ENCODE measurements at regions of chr11 and their contacts with region 1.

Region 1: GRCh38 chr11:118907051-118908042 is 18.4 kb downstream of the BCL9L start:
- DNase-seq: no peak
- ATAC-seq: peak; percentile 50
- H3K4me3 ChIP-seq: peak overlapping the region; percentile 18 to 19; a peak in 3 of 4 replicates
- H3K27ac ChIP-seq: peak overlapping the region; percentile 100
- H3K4me1 ChIP-seq: peaks cover 37 to 61% of the 10 kb centered on the region in 2 experiments
- H3K27me3 ChIP-seq: no peaks in the 10 kb centered on the region
- CTCF ChIP-seq: peak in 2 of 3 experiments; percentile 87 to 92; a peak in 4 of 6 replicates
- POLR2A ChIP-seq: no peak
- RAD21 ChIP-seq: no peak

Region 2: GRCh38 chr11:118740892-118741291 is 166.5 kb before region 1 on chr11:
- CTCF ChIA-PET with region 1: no interaction called
- POLR2A ChIA-PET with region 1: no interaction called
- RAD21 ChIA-PET with region 1: no interaction called
- intact Hi-C with region 1: no loop called
- DNase-seq: no peak
- ATAC-seq: no peak
- H3K4me3 ChIP-seq: no peak overlapping the region
- H3K27ac ChIP-seq: no peak overlapping the region
- H3K4me1 ChIP-seq: no peaks in the 10 kb centered on the region
- H3K27me3 ChIP-seq: no peaks in the 10 kb centered on the region
- CTCF ChIP-seq: no peak
- POLR2A ChIP-seq: no peak
- RAD21 ChIP-seq: no peak

Region 3: GRCh38 chr11:118791111-118791965 is 116.0 kb before region 1 on chr11 and contains the start of gene DDX6:
- CTCF ChIA-PET with region 1: interaction called, 4 read pairs
- POLR2A ChIA-PET with region 1: interaction called, 15 read pairs
- RAD21 ChIA-PET with region 1: interaction called in 1 of 2 experiments, 3 read pairs
- intact Hi-C with region 1: loop called (anchors 5 kb)
- DNase-seq: peak; percentile 45
- ATAC-seq: peak; percentile 70
- H3K4me3 ChIP-seq: peak within 1 kb of the TSS; percentile 96 to 99
- H3K27ac ChIP-seq: peak within 1 kb of the TSS; percentile 96
- H3K4me1 ChIP-seq: peaks cover 14 to 39% of the 10 kb centered on the region in 2 experiments
- H3K27me3 ChIP-seq: no peaks in the 10 kb centered on the region
- CTCF ChIP-seq: peak in 2 of 3 experiments; percentile 16 to 17; a peak in 2 of 6 replicates
- POLR2A ChIP-seq: no peak
- RAD21 ChIP-seq: no peak; the same call in 1 of the 2 replicates
- total RNA-seq, gene DDX6: 150 TPM

Region 4: DNA sequence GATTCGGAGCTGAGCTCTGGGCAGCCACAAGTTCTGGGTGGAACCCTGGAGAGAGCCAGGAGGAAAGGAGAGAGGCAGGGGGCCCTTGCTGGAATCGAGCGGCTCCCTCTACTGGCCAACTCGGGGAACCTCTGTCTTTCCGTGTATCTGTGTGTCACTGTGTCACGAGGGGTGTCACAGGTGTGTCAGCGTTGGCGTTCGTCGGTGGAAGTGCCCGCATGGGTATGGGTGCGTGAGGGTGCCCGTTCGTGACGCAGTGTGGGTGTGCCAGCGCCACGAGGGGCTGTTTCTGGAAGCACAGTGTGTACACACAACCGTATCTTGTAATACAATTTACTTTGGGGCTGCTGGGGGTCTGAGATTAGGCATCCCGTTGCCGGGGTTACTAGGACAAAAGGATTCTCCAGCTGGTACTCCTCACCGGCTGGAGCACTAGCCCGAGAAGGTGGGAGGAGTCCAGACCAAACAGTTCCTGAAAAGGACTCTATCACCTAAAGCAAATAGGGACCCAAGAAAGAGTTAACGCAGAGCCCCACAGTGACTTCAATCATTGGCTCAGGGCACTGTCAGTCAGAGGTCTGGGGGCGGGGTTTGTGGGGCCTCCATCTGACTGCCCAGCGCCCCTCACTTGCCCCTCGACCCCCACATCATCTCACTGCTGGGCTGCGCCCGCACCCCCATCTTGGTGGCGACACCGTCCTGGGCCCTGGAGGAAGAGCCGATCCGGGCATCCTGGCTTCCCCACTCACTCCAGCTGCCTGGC is 20.9 kb after region 1 on chr11:
- CTCF ChIA-PET with region 1: interaction called, 150 read pairs
- POLR2A ChIA-PET with region 1: interaction called, 3 read pairs
- RAD21 ChIA-PET with region 1: interaction called, 8 to 13 read pairs
- intact Hi-C with region 1: loop called (anchors 1 kb)
- DNase-seq: peak; percentile 96
- ATAC-seq: peak; percentile 68
- H3K4me3 ChIP-seq: peak overlapping the region; percentile 73 to 75
- H3K27ac ChIP-seq: peak overlapping the region; percentile 100
- H3K4me1 ChIP-seq: peaks cover 42 to 82% of the 10 kb centered on the region in 2 experiments
- H3K27me3 ChIP-seq: no peaks in the 10 kb centered on the region
- CTCF ChIP-seq: peak in 2 of 3 experiments; percentile 92 to 95; a peak in 4 of 6 replicates
- POLR2A ChIP-seq: no peak
- RAD21 ChIP-seq: no peak

Region 5: GRCh38 chr11:118956094-118956846 is 48.9 kb after region 1 on chr11 and contains the start of gene UPK2:
- CTCF ChIA-PET with region 1: interaction called, 10 read pairs
- POLR2A ChIA-PET with region 1: interaction called, 5 read pairs
- RAD21 ChIA-PET with region 1: interaction called in 1 of 2 experiments, 3 read pairs
- intact Hi-C with region 1: loop called (anchors 1 kb)
- DNase-seq: peak; percentile 78
- ATAC-seq: peak; percentile 99
- H3K4me3 ChIP-seq: no peak within 1 kb of the TSS
- H3K27ac ChIP-seq: no peak within 1 kb of the TSS
- H3K4me1 ChIP-seq: peaks cover 0 to 18% of the 10 kb centered on the region in 2 experiments; a peak in 2 of 4 replicates
- H3K27me3 ChIP-seq: no peaks in the 10 kb centered on the region
- CTCF ChIP-seq: peak; percentile 96 to 97 (median 96)
- POLR2A ChIP-seq: no peak
- RAD21 ChIP-seq: peak; percentile 100
- total RNA-seq, gene UPK2: 0.42 TPM

Region 6: GRCh38 chr11:119018074-119018938 is 111.0 kb after region 1 on chr11 and contains the starts of genes RPS25 and TRAPPC4:
- CTCF ChIA-PET with region 1: no interaction called
- POLR2A ChIA-PET with region 1: interaction called, 4 read pairs
- RAD21 ChIA-PET with region 1: no interaction called
- intact Hi-C with region 1: loop called (anchors 5 kb)
- DNase-seq: peak; percentile 94
- ATAC-seq: peak; percentile 81
- H3K4me3 ChIP-seq: peak within 1 kb of the TSS; percentile 72 to 91
- H3K27ac ChIP-seq: peak within 1 kb of the TSS; percentile 96
- H3K4me1 ChIP-seq: peaks cover 18 to 32% of the 10 kb centered on the region in 2 experiments
- H3K27me3 ChIP-seq: no peaks in the 10 kb centered on the region
- CTCF ChIP-seq: no peak
- POLR2A ChIP-seq: peak; percentile 79
- RAD21 ChIP-seq: no peak
- total RNA-seq, gene RPS25: 1,404 TPM
- total RNA-seq, gene TRAPPC4: 61.6 TPM

Region 7: GRCh38 chr11:119584193-119585037 is 677.1 kb after region 1 on chr11:
- CTCF ChIA-PET with region 1: no interaction called
- POLR2A ChIA-PET with region 1: no interaction called
- RAD21 ChIA-PET with region 1: no interaction called
- intact Hi-C with region 1: no loop called
- DNase-seq: no peak
- ATAC-seq: peak; percentile 87
- H3K4me3 ChIP-seq: peak overlapping the region; percentile 41 to 60
- H3K27ac ChIP-seq: peak overlapping the region; percentile 37; the same call in 1 of the 2 replicates
- H3K4me1 ChIP-seq: peaks cover 11 to 31% of the 10 kb centered on the region in 2 experiments
- H3K27me3 ChIP-seq: no peaks in the 10 kb centered on the region
- CTCF ChIP-seq: no peak
- POLR2A ChIP-seq: no peak
- RAD21 ChIP-seq: no peak